ENCODE measurements at regions of chr3 and their contacts with region 1.

Region 1: DNA sequence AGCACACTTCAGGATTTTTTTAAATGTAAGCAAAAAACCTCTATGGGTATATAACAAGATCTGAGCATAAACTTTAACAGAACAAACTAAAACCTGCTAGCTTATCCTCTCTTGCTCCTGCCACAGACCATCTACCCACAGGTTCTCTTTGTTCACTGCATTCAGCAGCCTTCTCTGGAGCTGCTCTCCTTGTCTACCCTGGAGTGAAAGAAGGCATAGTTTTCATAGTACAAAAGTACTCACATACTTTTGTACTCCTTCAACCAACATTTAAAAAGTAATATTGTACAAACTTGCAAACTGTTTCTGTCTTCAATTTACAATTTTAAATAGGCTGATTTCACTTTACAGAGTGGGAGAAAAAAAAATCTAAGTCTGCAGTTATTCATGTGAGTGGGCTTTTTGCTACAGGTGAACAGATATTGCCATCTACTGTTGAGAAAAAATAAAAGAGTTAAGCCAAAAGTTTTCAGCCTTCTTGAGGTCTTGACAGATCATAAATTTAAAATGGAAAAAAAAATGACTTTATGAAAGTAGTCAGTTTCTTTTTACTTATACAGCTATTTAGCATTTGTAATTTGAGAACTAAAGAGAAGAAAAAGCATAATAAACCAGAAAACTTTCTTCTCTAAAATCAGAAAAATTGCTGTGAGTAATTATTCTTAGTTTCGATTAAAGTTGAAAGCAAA is 20.4 kb downstream of the TERC start:
- DNase-seq: no peak
- H3K4me3 ChIP-seq: no peak overlapping the region
- H3K27ac ChIP-seq: no peak overlapping the region
- H3K4me1 ChIP-seq: no peaks in the 10 kb centered on the region
- H3K27me3 ChIP-seq: no peaks in the 10 kb centered on the region; the same call in 1 of the 2 replicates
- CTCF ChIP-seq: peak; percentile 70

Region 2: GRCh38 chr3:168511428-168512014 is 1233.0 kb before region 1 on chr3:
- CTCF ChIA-PET with region 1: no interaction called
- POLR2A ChIA-PET with region 1: no interaction called
- intact Hi-C with region 1: loop called (anchors 1 kb)
- DNase-seq: no peak
- H3K4me3 ChIP-seq: no peak overlapping the region
- H3K27ac ChIP-seq: no peak overlapping the region
- H3K4me1 ChIP-seq: no peaks in the 10 kb centered on the region
- H3K27me3 ChIP-seq: no peaks in the 10 kb centered on the region
- CTCF ChIP-seq: peak; percentile 74

Region 3: DNA sequence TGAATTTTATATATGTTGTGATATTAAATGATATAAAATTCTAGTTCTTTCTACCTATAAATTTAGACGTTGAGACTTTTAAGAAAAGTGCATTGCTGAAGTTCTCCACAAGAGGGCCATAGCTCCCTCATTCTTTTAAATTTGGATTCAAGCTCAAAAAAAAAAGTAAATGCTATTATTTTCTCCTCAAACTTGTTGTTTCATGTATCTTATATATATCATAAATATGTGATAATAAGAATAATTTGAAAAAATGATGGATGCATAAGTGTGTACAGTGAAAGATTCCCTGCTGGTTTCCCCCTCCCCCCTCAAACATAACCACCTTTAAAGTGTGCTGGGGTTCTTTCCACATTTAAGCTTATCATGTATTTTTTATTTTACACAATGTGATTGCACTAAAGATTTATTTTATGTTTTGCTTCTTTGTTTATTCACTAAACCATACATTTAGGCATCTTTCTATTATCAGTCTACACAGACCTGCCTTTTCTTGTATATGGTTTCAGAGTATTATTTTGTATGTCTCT is 879.4 kb before region 1 on chr3:
- CTCF ChIA-PET with region 1: no interaction called
- POLR2A ChIA-PET with region 1: no interaction called
- intact Hi-C with region 1: loop called (anchors 1 kb)
- DNase-seq: peak in 1 of 2 experiments; percentile 23
- H3K4me3 ChIP-seq: no peak overlapping the region
- H3K27ac ChIP-seq: no peak overlapping the region
- H3K4me1 ChIP-seq: no peaks in the 10 kb centered on the region; the same call in 1 of the 2 replicates
- H3K27me3 ChIP-seq: no peaks in the 10 kb centered on the region
- CTCF ChIP-seq: peak; percentile 94

Region 4: DNA sequence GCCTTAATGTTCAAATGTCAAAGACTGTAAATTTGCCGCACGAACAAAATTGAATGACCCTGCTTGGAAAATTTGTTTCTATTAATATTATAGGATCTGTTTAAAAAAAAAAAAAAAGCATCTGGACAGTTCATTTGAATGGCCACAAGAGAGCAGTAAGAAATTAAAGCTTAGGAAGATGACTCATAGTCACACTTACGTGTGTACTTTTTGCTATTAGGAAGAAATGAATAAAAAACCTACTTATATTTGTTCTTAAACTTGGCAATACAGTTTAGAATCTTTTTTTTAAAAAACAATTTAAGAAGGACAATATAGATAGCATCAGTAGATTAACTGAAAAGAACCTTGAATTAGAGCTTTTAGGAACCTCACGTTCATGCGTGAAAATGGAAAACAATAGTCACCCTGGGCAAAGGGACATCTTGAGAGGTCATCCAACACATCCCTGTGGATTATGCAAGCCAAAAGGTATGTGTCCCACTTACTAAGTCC is 702.8 kb before region 1 on chr3:
- CTCF ChIA-PET with region 1: no interaction called
- POLR2A ChIA-PET with region 1: no interaction called
- intact Hi-C with region 1: loop called (anchors 10 kb)
- DNase-seq: peak in 1 of 2 experiments; percentile 66
- H3K4me3 ChIP-seq: no peak overlapping the region
- H3K27ac ChIP-seq: no peak overlapping the region
- H3K4me1 ChIP-seq: peaks cover 25% of the 10 kb centered on the region
- H3K27me3 ChIP-seq: no peaks in the 10 kb centered on the region
- CTCF ChIP-seq: peak; percentile 78

Region 5: GRCh38 chr3:169323578-169324451 is 420.7 kb before region 1 on chr3:
- CTCF ChIA-PET with region 1: no interaction called
- POLR2A ChIA-PET with region 1: interaction called, 11 read pairs
- intact Hi-C with region 1: no loop called
- DNase-seq: no peak
- H3K4me3 ChIP-seq: no peak overlapping the region
- H3K27ac ChIP-seq: no peak overlapping the region
- H3K4me1 ChIP-seq: peaks cover 70% of the 10 kb centered on the region
- H3K27me3 ChIP-seq: no peaks in the 10 kb centered on the region
- CTCF ChIP-seq: no peak

Region 6: GRCh38 chr3:169764452-169765274 is 20.2 kb after region 1 on chr3 and contains the start of gene TERC:
- CTCF ChIA-PET with region 1: no interaction called
- POLR2A ChIA-PET with region 1: no interaction called
- intact Hi-C with region 1: no loop called
- DNase-seq: peak; percentile 93 to 96
- H3K4me3 ChIP-seq: peak within 1 kb of the TSS; percentile 99
- H3K27ac ChIP-seq: peak within 1 kb of the TSS; percentile 75
- H3K4me1 ChIP-seq: peaks cover 5% of the 10 kb centered on the region; the same call in 1 of the 2 replicates
- H3K27me3 ChIP-seq: no peaks in the 10 kb centered on the region
- CTCF ChIP-seq: no peak
- total RNA-seq, gene TERC: 7.6 and 22.7 TPM in 2 replicates

Region 7: GRCh38 chr3:169827712-169828111 is 83.2 kb after region 1 on chr3:
- CTCF ChIA-PET with region 1: no interaction called
- POLR2A ChIA-PET with region 1: no interaction called
- intact Hi-C with region 1: no loop called
- DNase-seq: no peak
- H3K4me3 ChIP-seq: no peak overlapping the region
- H3K27ac ChIP-seq: no peak overlapping the region
- H3K4me1 ChIP-seq: no peaks in the 10 kb centered on the region
- H3K27me3 ChIP-seq: no peaks in the 10 kb centered on the region
- CTCF ChIP-seq: no peak